Heart left ventricle (tissue), 16 donors: ENCODE measurements at regions of chr1 and their contacts with region 1.

Region 1: DNA sequence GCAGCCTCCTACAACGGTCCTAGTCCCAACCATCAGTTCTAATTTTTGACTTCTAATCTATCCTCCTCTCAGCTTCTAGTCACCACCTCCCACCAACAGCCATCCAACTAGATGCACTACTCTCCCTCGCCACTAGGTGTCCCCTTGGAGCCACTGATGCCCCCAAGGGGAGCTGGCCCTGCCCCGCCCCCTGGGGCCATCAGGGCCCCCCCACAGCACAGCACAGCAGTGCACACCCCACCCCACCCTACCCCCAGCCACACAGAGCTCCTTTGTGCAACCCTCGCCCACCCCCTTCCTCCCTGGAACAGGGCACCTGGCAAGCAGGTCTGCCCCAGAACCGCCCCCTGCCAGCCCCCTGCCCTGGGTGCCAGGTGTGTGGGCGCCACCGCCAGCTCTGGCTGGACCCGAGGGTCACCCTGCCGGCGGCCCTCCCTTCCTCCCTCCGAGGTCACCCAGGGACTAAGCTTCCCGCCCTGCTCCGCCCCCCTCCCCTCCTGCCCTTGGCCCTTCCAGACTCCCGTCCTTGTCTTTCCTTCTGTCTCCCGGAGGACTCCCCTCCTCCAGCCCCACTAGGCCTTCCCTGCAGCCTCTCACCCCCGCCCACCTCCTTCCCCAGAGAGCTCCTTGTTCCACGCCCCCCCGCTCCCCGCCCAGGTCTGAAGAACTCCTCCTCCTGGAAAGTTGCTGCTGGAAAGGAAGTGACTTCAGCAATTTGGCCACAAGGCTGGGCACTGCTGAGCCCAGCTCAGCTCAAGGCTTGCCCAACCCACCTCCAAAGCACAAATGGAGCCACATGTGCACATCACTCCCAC is 47.0 kb downstream of the AHDC1 start:
- DNase-seq: peak; percentile 93 to 96 (median 96)
- ATAC-seq: peak; percentile 21 to 76 (median 72)
- H3K4me3 ChIP-seq: peak overlapping the region in 9 of 12 donors; percentile 15 to 40 (median 32)
- H3K27ac ChIP-seq: peak overlapping the region; percentile 77 to 96 (median 90)
- H3K4me1 ChIP-seq: peaks cover 4 to 77% (median 66%) of the 10 kb centered on the region in 12 donors
- H3K27me3 ChIP-seq: no peaks in the 10 kb centered on the region
- CTCF ChIP-seq: peak; percentile 88 to 98 (median 95)
- POLR2A ChIP-seq: no peak

Region 2: DNA sequence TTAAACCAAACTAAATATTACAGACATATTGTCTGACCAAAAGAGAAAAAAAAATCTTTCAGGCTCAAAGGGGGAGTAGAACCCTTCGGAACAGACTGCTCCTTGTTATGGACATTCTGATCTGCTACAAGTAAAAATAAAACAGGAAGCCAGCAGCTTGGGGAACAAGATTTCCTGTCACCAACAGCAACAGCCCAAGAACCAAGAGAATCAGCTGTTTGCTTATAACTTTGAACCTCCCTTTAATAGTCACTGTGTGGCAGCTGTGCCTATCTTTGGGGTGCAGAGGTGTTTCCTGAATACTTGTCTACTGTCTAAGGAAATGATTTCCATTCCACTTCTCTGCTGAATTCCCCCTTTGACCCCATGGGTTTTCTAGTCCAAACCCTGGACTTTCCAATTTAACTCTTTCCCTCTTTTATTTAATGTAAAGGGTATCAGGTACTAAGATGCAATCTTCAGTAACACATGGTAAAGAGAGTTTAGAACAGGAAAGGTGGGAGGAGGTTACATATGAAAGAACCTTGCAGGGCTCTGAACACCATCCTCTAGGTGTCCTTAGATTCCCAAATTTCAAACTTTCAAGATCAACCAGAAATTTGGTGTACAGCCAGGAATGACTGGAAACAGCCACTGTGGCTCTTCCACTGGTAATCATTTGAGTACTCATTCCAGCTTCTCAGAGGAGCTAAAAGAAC is 125.9 kb before region 1 on chr1:
- intact Hi-C with region 1: loop called in 1 of 10 experiments (anchors 5 kb)
- DNase-seq: peak in 1 of 5 donors; percentile 44
- ATAC-seq: peak; percentile 27 to 53 (median 42)
- H3K4me3 ChIP-seq: peak overlapping the region in 7 of 12 donors; percentile 2 to 26 (median 5)
- H3K27ac ChIP-seq: peak overlapping the region; percentile 82 to 94 (median 86)
- H3K4me1 ChIP-seq: peaks cover 35 to 100% (median 93%) of the 10 kb centered on the region in 12 donors
- H3K27me3 ChIP-seq: no peaks in the 10 kb centered on the region
- CTCF ChIP-seq: peak in 5 of 12 donors; percentile 12 to 42 (median 28)
- POLR2A ChIP-seq: no peak

Region 3: GRCh38 chr1:27504588-27505419 is 52.2 kb before region 1 on chr1:
- intact Hi-C with region 1: loop called in 1 of 10 experiments (anchors 2 kb)
- DNase-seq: peak; percentile 90 to 94 (median 91)
- ATAC-seq: peak; percentile 89 to 96 (median 92)
- H3K4me3 ChIP-seq: peak overlapping the region in 6 of 12 donors; percentile 5 to 46 (median 34)
- H3K27ac ChIP-seq: peak overlapping the region; percentile 88 to 99 (median 93)
- H3K4me1 ChIP-seq: peaks cover 8 to 39% (median 25%) of the 10 kb centered on the region in 12 donors
- H3K27me3 ChIP-seq: no peaks in the 10 kb centered on the region
- CTCF ChIP-seq: peak in 1 of 12 donors; percentile 5
- POLR2A ChIP-seq: no peak

Region 4: DNA sequence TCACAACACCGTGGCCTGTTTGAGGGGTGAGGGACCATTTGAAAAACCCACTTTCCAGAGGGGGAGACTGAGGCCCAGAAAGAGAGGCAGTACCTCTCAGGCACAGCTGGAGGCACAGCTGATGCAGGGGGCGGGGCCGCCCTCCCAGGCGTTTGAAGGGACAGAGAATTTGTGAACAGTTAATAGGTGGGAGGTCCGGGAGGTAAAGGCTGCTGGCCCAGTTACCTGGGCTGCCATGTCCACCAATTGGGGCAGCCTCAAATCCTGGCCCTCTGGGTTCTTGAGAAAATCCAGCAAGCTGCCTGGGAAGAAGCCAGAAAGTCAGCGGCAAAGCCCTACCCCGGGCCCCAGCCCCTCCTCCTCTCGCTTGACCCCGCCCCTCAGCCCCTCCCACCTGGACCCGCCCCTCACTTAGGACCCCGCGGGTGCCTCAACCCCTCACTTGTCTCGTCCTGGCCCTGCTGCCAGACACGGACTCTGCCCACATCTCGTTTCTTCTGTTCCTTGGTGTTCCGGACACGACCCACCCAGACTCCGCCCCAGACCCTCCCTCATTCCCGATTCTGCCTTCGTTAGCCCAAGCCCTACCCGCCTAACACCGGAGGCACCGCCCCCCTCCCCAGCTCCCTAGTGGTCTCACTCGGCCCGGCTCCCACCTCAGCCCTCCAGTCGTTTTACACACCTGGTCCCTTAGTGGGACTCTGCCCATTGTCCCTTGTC is 57.8 kb after region 1 on chr1:
- intact Hi-C with region 1: no loop called
- DNase-seq: peak in 1 of 5 donors; percentile 65
- ATAC-seq: peak in 1 of 4 donors; percentile 13
- H3K4me3 ChIP-seq: no peak overlapping the region
- H3K27ac ChIP-seq: no peak overlapping the region
- H3K4me1 ChIP-seq: peaks cover 0 to 42% (median 2%) of the 10 kb centered on the region in 12 donors
- H3K27me3 ChIP-seq: no peaks in the 10 kb centered on the region
- CTCF ChIP-seq: no peak
- POLR2A ChIP-seq: no peak